MCF 10A (cell line): ENCODE measurements at regions of chr12 and their contacts with region 1.

Region 1: GRCh38 chr12:57765042-57765697 is 1.7 kb downstream of the CYP27B1 start:
- DNase-seq: peak; percentile 73
- H3K4me3 Mint-ChIP-seq: peak overlapping the region; percentile 89
- H3K27ac Mint-ChIP-seq: peak overlapping the region; percentile 89
- H3K4me1 Mint-ChIP-seq: peaks cover 26% of the 10 kb centered on the region
- H3K27me3 Mint-ChIP-seq: no peaks in the 10 kb centered on the region
- CTCF ChIP-seq: peak; percentile 35

Region 2: GRCh38 chr12:57744777-57745484 is 20.2 kb before region 1 on chr12 and contains the start of gene TSPAN31:
- CTCF ChIA-PET with region 1: interaction called, 3 read pairs
- POLR2A ChIA-PET with region 1: interaction called, 13 read pairs
- intact Hi-C with region 1: no loop called
- DNase-seq: peak; percentile 99
- H3K4me3 Mint-ChIP-seq: peak within 1 kb of the TSS; percentile 100
- H3K27ac Mint-ChIP-seq: peak within 1 kb of the TSS; percentile 100
- H3K4me1 Mint-ChIP-seq: peaks cover 11% of the 10 kb centered on the region
- H3K27me3 Mint-ChIP-seq: peaks cover 16% of the 10 kb centered on the region
- CTCF ChIP-seq: no peak
- total RNA-seq, gene TSPAN31: 24.8 and 30.9 TPM in 2 replicates

Region 3: GRCh38 chr12:57751788-57752667 is 13.1 kb before region 1 on chr12 and contains the start of gene CDK4:
- CTCF ChIA-PET with region 1: interaction called, 12 read pairs
- POLR2A ChIA-PET with region 1: interaction called, 26 read pairs
- intact Hi-C with region 1: no loop called
- DNase-seq: peak; percentile 99
- H3K4me3 Mint-ChIP-seq: peak within 1 kb of the TSS; percentile 92
- H3K27ac Mint-ChIP-seq: peak within 1 kb of the TSS; percentile 93
- H3K4me1 Mint-ChIP-seq: peaks cover 40% of the 10 kb centered on the region
- H3K27me3 Mint-ChIP-seq: no peaks in the 10 kb centered on the region
- CTCF ChIP-seq: no peak
- total RNA-seq, gene CDK4: 117 and 123 TPM in 2 replicates

Region 4: DNA sequence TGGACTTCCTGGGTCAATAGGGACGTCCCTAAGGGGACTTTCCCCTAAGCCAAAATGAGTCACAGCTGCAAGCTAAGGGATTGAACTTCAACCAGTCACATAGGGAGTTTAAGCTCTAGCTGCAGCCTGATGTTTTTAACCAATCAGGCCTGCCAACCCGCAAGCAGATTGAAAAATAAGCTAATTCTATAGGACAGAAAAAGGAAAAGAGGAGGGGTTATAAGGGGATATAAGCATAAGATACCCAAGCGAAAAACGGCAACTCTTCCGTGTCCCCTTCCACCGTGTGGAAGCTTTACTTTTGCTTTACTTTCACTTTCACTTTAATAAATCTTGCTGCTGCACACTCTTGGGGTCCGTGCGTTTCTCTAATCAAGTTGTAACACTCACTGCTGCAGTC is 200.6 kb after region 1 on chr12:
- CTCF ChIA-PET with region 1: no interaction called
- POLR2A ChIA-PET with region 1: no interaction called
- intact Hi-C with region 1: no loop called
- DNase-seq: no peak
- H3K4me3 Mint-ChIP-seq: no peak overlapping the region
- H3K27ac Mint-ChIP-seq: no peak overlapping the region
- H3K4me1 Mint-ChIP-seq: no peaks in the 10 kb centered on the region
- H3K27me3 Mint-ChIP-seq: no peaks in the 10 kb centered on the region
- CTCF ChIP-seq: no peak